Endothelial cell of umbilical vein (primary cell): ENCODE measurements at regions of chr11 and their contacts with region 1.

Region 1: GRCh38 chr11:58629857-58630256 is 7.4 kb downstream of the CNTF start:
- DNase-seq: peak; percentile 46
- H3K4me3 ChIP-seq: no peak overlapping the region
- H3K27ac ChIP-seq: no peak overlapping the region
- H3K4me1 ChIP-seq: peaks cover 13% of the 10 kb centered on the region
- H3K27me3 ChIP-seq: no peaks in the 10 kb centered on the region
- CTCF ChIP-seq: peak; percentile 41 to 65
- POLR2A ChIP-seq: no peak

Region 2: DNA sequence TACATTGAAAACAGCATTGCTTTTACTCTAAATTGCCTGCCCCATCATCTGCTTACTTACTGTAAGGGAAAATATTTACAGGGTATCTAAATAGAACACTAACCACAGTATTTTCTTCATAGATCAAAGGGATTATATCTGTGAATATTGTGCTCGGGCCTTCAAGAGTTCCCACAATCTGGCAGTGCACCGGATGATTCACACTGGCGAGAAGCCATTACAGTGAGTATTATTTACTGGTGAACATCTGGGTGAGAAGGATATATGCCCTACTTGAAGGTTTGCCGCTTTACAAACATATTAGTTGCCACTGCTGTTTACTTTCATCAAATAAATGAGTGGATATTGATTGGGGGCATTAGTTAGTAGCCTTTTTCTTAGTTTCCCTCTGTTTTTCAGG is 13.3 kb before region 1 on chr11:
- CTCF ChIA-PET with region 1: interaction called, 13 read pairs
- POLR2A ChIA-PET with region 1: no interaction called
- dilution Hi-C with region 1: no loop called
- intact Hi-C with region 1: no loop called
- DNase-seq: peak; percentile 30
- H3K4me3 ChIP-seq: no peak overlapping the region
- H3K27ac ChIP-seq: no peak overlapping the region
- H3K4me1 ChIP-seq: no peaks in the 10 kb centered on the region
- H3K27me3 ChIP-seq: no peaks in the 10 kb centered on the region
- CTCF ChIP-seq: no peak
- POLR2A ChIP-seq: no peak